ENCODE measurements at regions of chr19 and their contacts with region 1.

Region 1: GRCh38 chr19:49676690-49677231 is 310 bp upstream of the PRMT1 start:
- DNase-seq: peak; percentile 97 to 100
- ATAC-seq: peak; percentile 72 to 88 (median 76)
- H3K4me3 ChIP-seq: peak overlapping the region; percentile 87
- H3K4me3 Mint-ChIP-seq: peak overlapping the region; percentile 99
- H3K27ac ChIP-seq: peak overlapping the region; percentile 93
- H3K27ac Mint-ChIP-seq: peak overlapping the region; percentile 98 to 99
- H3K4me1 ChIP-seq: peaks cover 46% of the 10 kb centered on the region
- H3K4me1 Mint-ChIP-seq: peaks cover 30 to 56% of the 10 kb centered on the region in 2 donors
- H3K27me3 ChIP-seq: no peaks in the 10 kb centered on the region
- H3K27me3 Mint-ChIP-seq: no peaks in the 10 kb centered on the region
- CTCF ChIP-seq: no peak

Region 2: GRCh38 chr19:49271080-49271762 is 405.5 kb before region 1 on chr19:
- intact Hi-C with region 1: loop called (anchors 1 kb)
- DNase-seq: no peak
- ATAC-seq: no peak
- H3K4me3 ChIP-seq: no peak overlapping the region
- H3K4me3 Mint-ChIP-seq: no peak overlapping the region
- H3K27ac ChIP-seq: no peak overlapping the region
- H3K27ac Mint-ChIP-seq: no peak overlapping the region
- H3K4me1 ChIP-seq: no peaks in the 10 kb centered on the region
- H3K4me1 Mint-ChIP-seq: no peaks in the 10 kb centered on the region
- H3K27me3 ChIP-seq: no peaks in the 10 kb centered on the region
- H3K27me3 Mint-ChIP-seq: peaks cover 22 to 33% of the 10 kb centered on the region in 2 donors
- CTCF ChIP-seq: no peak

Region 3: DNA sequence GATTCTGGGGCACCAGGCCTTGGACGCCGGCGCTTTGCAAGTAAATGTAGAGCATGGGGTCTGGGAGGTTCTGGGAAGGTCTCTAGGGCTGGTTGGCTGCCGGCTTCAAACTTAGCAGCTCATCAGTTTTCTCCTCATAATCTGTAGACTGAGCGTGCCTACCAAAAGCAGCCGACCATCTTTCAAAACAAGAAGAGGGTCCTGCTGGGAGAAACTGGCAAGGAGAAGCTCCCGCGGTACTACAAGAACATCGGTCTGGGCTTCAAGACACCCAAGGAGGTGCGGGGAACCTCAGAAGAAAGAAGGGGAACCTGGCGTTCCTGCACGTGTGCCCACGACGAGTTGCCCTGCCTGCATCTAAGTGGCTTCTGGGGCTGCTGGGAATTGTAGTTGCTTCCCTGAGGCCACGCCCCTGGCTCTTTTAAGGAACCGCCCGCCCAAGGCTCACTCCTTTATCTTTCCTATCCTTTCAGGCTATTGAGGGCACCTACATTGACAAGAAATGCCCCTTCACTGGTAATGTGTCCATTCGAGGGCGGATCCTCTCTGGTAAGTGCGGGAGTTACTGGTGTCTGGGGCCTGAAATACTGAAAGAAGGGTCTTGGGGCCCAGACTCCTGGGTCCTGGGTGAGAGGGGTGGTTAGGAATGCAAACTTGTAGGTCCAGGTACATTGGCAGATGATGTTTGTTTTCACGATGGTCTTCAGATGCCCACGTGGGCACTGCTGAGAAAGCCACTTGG is 179.5 kb before region 1 on chr19:
- intact Hi-C with region 1: loop called (anchors 1 kb)
- DNase-seq: peak; percentile 43 to 91
- ATAC-seq: no peak
- H3K4me3 ChIP-seq: peak overlapping the region; percentile 62
- H3K4me3 Mint-ChIP-seq: peak overlapping the region; percentile 99
- H3K27ac ChIP-seq: peak overlapping the region; percentile 83
- H3K27ac Mint-ChIP-seq: peak overlapping the region; percentile 97 to 98
- H3K4me1 ChIP-seq: peaks cover 83% of the 10 kb centered on the region
- H3K4me1 Mint-ChIP-seq: peaks cover 55 to 69% of the 10 kb centered on the region in 2 donors
- H3K27me3 ChIP-seq: no peaks in the 10 kb centered on the region
- H3K27me3 Mint-ChIP-seq: no peaks in the 10 kb centered on the region
- CTCF ChIP-seq: no peak

Region 4: DNA sequence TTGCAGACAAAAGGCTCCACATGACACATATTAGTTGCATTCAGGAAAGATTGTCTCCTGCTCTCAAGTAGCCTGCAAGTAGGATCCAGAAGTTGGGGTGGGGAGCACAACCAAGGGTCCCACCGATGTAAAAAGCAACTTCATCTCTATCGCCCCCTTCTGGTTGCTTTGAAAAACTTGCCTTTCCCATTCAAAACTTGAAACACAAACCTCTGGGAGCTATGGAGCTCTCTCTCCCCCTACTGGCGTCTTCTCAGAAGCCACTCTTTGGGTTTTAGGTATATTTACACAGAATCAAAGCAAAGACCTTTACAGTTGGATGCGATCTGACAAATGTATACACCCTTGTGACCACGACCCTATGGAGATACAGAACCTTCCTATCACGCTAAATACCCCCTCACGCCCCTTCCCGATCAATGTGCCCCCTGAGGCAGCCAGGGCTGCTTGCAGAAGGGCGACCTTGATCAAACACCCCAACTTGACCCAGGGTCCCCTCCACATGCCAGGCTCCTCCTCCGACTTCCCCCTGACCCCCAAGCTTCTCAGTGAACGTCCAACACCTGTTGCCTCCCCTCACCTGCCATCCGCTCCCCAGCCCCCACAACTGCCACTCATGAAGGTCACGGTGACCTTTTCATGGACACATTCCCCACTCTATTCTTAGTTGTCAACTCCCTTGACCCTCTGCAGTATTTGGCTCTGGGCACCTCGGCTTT is 106.5 kb before region 1 on chr19:
- intact Hi-C with region 1: loop called (anchors 2 kb)
- DNase-seq: peak; percentile 39 to 96
- ATAC-seq: peak; percentile 66 to 80 (median 67)
- H3K4me3 ChIP-seq: no peak overlapping the region
- H3K4me3 Mint-ChIP-seq: peak overlapping the region; percentile 79
- H3K27ac ChIP-seq: peak overlapping the region; percentile 13
- H3K27ac Mint-ChIP-seq: peak overlapping the region; percentile 89 to 91
- H3K4me1 ChIP-seq: peaks cover 55% of the 10 kb centered on the region
- H3K4me1 Mint-ChIP-seq: peaks cover 25 to 41% of the 10 kb centered on the region in 2 donors
- H3K27me3 ChIP-seq: no peaks in the 10 kb centered on the region
- H3K27me3 Mint-ChIP-seq: no peaks in the 10 kb centered on the region
- CTCF ChIP-seq: peak; percentile 98

Region 5: DNA sequence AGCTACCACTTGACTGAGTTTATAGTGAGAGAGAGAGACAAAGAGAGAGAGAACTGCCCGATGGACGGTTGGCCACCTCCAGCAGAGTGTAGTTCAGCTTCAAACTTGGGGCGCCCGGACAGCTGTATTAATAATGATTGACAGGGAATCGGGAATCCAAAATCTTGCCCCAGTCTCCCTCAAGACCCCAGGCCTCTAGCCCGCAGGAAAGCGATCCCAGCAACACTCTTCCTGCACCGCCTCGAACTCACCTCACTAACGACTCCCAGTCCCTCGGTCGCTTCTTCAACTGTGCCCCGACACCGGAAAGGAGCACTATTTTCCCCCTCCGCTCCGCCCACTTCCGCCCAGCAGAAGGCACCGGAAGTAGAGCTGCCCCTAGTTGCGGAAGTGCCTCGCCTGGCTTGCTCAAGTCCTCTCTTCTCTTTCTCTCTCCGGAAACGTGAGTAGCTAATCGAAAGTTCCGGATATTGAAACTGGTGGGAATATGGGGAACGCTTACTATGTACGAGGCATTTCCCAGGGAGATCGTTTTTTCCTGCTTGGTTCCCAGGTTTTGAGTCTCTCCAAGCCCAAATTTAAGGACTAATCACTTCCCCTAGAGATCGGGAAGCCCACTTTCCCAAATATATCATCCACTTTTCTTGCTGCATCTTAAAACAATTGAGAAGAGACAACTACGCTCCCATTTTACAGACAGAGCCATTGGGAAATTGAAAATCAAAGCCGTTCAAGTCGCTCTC is 96.3 kb before region 1 on chr19 and contains the start of gene NOSIP:
- intact Hi-C with region 1: no loop called
- DNase-seq: peak; percentile 92 to 99
- ATAC-seq: peak; percentile 99 to 100 (median 99)
- H3K4me3 ChIP-seq: peak within 1 kb of the TSS; percentile 61
- H3K4me3 Mint-ChIP-seq: peak within 1 kb of the TSS; percentile 96
- H3K27ac ChIP-seq: peak within 1 kb of the TSS; percentile 47
- H3K27ac Mint-ChIP-seq: peak within 1 kb of the TSS; percentile 89 to 92
- H3K4me1 ChIP-seq: peaks cover 14% of the 10 kb centered on the region
- H3K4me1 Mint-ChIP-seq: peaks cover 21 to 32% of the 10 kb centered on the region in 2 donors
- H3K27me3 ChIP-seq: no peaks in the 10 kb centered on the region
- H3K27me3 Mint-ChIP-seq: no peaks in the 10 kb centered on the region
- CTCF ChIP-seq: no peak
- total RNA-seq, gene NOSIP: 46.7 to 63.6 (median 59.8) TPM

Region 6: DNA sequence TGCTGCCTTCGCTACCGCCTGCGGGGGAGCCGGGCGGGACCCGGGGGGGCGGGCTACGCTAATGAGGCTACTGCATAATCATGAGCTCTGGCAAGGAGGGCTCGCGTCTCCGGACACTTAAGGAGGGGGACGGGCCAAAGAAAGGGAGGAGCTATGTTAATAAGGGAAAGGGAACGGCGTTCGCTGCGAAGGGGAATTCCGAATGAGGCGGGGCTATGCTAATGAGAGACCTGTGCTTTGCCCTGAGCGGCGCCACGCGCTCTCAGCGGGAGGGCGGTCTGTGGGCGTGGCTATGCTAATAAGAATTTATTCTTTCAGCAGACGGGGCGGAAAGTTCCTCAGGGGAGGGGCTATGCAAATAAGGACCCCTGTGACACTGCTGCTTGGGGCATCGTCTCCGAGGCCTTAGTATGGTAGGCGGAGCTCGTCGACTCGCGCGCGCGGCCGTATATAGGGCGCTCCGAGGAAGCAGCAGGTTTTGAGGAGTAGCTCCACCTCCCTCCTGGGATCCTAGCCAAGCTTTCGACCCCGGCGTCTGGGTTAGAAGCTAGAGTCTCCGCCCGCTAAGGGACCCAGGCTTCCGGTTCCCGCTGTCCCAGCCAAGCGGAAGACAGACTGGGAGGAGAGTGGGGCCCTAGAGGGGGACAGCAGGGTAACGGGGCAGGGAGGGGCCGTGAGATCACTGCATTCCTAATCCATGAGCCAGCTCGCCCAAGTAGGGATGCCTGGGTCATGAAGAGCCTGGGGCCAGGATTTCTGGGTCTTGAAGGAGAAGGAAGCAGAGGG is 36.5 kb before region 1 on chr19 and contains the start of gene RRAS:
- intact Hi-C with region 1: loop called (anchors 1 kb)
- DNase-seq: peak; percentile 99 to 100
- ATAC-seq: peak; percentile 71 to 87 (median 73)
- H3K4me3 ChIP-seq: peak within 1 kb of the TSS; percentile 58
- H3K4me3 Mint-ChIP-seq: peak within 1 kb of the TSS; percentile 93
- H3K27ac ChIP-seq: peak within 1 kb of the TSS; percentile 86
- H3K27ac Mint-ChIP-seq: peak within 1 kb of the TSS; percentile 96 to 100
- H3K4me1 ChIP-seq: peaks cover 44% of the 10 kb centered on the region
- H3K4me1 Mint-ChIP-seq: peaks cover 45 to 63% of the 10 kb centered on the region in 2 donors
- H3K27me3 ChIP-seq: no peaks in the 10 kb centered on the region
- H3K27me3 Mint-ChIP-seq: no peaks in the 10 kb centered on the region
- CTCF ChIP-seq: no peak
- total RNA-seq, gene RRAS: 2.0 to 7.7 (median 5.9) TPM

Region 7: GRCh38 chr19:49766007-49766937 is 89.5 kb after region 1 on chr19:
- intact Hi-C with region 1: no loop called
- DNase-seq: peak; percentile 96 to 100
- ATAC-seq: peak; percentile 87 to 97 (median 87)
- H3K4me3 ChIP-seq: peak overlapping the region; percentile 50
- H3K4me3 Mint-ChIP-seq: peak overlapping the region; percentile 95
- H3K27ac ChIP-seq: peak overlapping the region; percentile 71
- H3K27ac Mint-ChIP-seq: peak overlapping the region; percentile 91 to 93
- H3K4me1 ChIP-seq: peaks cover 58% of the 10 kb centered on the region
- H3K4me1 Mint-ChIP-seq: peaks cover 45 to 55% of the 10 kb centered on the region in 2 donors
- H3K27me3 ChIP-seq: no peaks in the 10 kb centered on the region
- H3K27me3 Mint-ChIP-seq: no peaks in the 10 kb centered on the region
- CTCF ChIP-seq: no peak

Region 8: DNA sequence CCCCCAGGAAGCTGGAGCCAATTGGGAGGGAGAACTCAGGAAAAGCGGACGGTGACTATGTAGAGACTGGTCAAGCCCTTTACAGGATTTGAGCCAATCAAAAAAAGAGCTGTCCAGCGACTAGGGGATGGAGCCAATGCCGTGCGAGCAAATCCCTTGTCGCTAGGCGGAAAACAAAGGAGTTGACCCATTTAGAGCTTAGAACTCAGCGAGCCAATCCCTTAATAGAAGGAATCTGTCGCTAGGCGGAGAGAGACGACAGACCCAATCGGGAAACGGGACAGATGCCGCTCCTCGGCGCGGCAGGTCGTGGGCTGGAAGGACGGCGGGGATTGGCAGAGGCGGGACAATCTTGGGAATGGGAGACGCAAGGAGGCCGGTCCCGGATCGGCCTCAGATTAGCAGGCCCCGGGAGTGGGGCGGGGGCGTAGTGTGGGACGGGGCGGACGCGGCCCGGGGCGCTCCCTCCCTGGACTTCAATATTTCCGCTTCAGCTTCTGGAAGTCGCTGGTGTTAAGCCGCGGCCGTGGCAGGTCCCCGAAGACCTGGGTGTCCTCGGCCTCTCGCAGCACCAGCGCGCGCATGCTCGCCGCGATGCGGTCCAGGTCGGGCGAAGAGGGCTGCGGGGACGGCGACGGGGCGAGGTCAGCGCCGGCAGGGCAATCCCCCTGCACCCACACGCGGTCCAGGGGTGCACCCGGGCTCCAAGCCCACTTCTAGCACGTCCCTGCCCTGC is 192.8 kb after region 1 on chr19:
- intact Hi-C with region 1: loop called (anchors 5 kb)
- DNase-seq: peak; percentile 90 to 96
- ATAC-seq: peak; percentile 76 to 90 (median 81)
- H3K4me3 ChIP-seq: peak overlapping the region; percentile 68
- H3K4me3 Mint-ChIP-seq: no peak overlapping the region
- H3K27ac ChIP-seq: peak overlapping the region; percentile 88
- H3K27ac Mint-ChIP-seq: no peak overlapping the region
- H3K4me1 ChIP-seq: peaks cover 51% of the 10 kb centered on the region
- H3K4me1 Mint-ChIP-seq: peaks cover 18 to 20% of the 10 kb centered on the region in 2 donors
- H3K27me3 ChIP-seq: no peaks in the 10 kb centered on the region
- H3K27me3 Mint-ChIP-seq: no peaks in the 10 kb centered on the region
- CTCF ChIP-seq: no peak

Region 9: DNA sequence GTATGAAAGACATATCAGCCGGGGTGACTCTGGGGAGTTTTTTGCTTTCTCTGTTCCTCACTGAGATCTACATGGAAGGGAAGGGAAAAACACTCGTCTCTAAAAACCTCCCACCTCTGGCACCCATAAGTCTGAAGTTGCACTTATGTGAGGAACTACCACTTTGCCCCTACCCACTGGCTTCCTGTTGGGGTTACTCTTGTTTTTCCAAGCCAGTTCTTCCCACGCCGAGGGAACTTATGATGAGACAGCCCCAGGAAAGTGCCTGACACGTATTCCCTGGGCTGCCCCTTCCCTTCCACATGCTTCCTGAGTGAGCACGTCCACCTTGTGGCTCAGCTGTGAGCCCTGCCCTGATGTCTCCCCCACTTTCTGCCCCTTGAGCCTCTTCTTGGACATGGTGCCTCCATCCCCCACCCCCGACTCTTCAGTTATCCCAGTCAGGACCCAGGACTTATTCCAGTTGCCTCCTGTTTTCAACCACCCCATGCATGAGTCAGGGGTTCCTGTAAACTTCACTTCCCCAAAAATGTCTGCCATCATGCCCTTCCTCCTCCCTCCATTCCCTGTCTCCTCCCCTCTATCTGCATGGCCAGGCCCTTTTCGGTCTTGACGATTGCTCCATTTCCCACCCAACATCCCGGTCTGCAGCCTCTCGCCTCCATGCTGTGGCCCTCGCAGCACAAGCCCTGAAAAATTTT is 1460.2 kb after region 1 on chr19:
- intact Hi-C with region 1: no loop called
- DNase-seq: no peak
- ATAC-seq: no peak
- H3K4me3 ChIP-seq: no peak overlapping the region
- H3K4me3 Mint-ChIP-seq: peak overlapping the region; percentile 80
- H3K27ac ChIP-seq: peak overlapping the region; percentile 78
- H3K27ac Mint-ChIP-seq: peak overlapping the region; percentile 90 to 96
- H3K4me1 ChIP-seq: peaks cover 82% of the 10 kb centered on the region
- H3K4me1 Mint-ChIP-seq: peaks cover 81 to 91% of the 10 kb centered on the region in 2 donors
- H3K27me3 ChIP-seq: no peaks in the 10 kb centered on the region
- H3K27me3 Mint-ChIP-seq: no peaks in the 10 kb centered on the region
- CTCF ChIP-seq: no peak

Measured in natural killer cell (primary cell).